Activated naive CD4-positive, alpha-beta T cell treated with anti-CD3 and anti-CD28 coated beads, Interleukin-2, amount 10 ng/mL, durations not matched to agents 7 days and 5 days (primary cell): ENCODE measurements at regions of chr6 and their contacts with region 1.

Region 1: DNA sequence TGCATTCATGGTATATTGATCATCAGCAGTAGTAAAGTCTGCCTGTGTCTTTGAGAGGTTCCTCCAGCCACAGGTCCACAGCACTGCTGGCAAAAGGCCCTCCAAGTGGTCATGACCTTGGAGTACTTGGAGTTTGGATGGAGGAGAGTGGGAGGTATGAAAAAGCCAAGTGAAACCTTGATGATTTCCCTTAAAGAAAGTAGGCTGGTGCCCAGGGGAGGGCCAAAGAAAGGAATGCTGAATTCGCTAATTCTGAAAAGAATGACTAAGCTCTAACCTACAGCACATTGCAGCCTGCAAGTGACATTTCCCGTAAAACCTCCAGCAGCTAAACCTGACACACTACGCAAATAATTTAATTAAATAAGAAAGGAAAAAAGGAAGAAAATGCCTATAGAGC is 223.4 kb upstream of the TAB2 start:
- DNase-seq: no peak
- H3K4me3 Mint-ChIP-seq: peak overlapping the region; percentile 67
- H3K27ac Mint-ChIP-seq: peak overlapping the region; percentile 98
- H3K4me1 Mint-ChIP-seq: peaks cover 86% of the 10 kb centered on the region
- H3K27me3 Mint-ChIP-seq: no peaks in the 10 kb centered on the region

Region 2: GRCh38 chr6:149082286-149082707 is 11.9 kb before region 1 on chr6:
- CTCF ChIA-PET with region 1: interaction called, 13 read pairs
- DNase-seq: peak; percentile 94
- H3K4me3 Mint-ChIP-seq: peak overlapping the region; percentile 0
- H3K27ac Mint-ChIP-seq: peak overlapping the region; percentile 89
- H3K4me1 Mint-ChIP-seq: peaks cover 88% of the 10 kb centered on the region
- H3K27me3 Mint-ChIP-seq: no peaks in the 10 kb centered on the region

Region 3: GRCh38 chr6:149128494-149129025 is 34.4 kb after region 1 on chr6:
- CTCF ChIA-PET with region 1: interaction called, 14 read pairs
- DNase-seq: peak; percentile 84
- H3K4me3 Mint-ChIP-seq: peak overlapping the region; percentile 21
- H3K27ac Mint-ChIP-seq: peak overlapping the region; percentile 95
- H3K4me1 Mint-ChIP-seq: peaks cover 18% of the 10 kb centered on the region
- H3K27me3 Mint-ChIP-seq: no peaks in the 10 kb centered on the region